Calu3 (cell line): ENCODE measurements at regions of chr11 and their contacts with region 1.

Region 1: DNA sequence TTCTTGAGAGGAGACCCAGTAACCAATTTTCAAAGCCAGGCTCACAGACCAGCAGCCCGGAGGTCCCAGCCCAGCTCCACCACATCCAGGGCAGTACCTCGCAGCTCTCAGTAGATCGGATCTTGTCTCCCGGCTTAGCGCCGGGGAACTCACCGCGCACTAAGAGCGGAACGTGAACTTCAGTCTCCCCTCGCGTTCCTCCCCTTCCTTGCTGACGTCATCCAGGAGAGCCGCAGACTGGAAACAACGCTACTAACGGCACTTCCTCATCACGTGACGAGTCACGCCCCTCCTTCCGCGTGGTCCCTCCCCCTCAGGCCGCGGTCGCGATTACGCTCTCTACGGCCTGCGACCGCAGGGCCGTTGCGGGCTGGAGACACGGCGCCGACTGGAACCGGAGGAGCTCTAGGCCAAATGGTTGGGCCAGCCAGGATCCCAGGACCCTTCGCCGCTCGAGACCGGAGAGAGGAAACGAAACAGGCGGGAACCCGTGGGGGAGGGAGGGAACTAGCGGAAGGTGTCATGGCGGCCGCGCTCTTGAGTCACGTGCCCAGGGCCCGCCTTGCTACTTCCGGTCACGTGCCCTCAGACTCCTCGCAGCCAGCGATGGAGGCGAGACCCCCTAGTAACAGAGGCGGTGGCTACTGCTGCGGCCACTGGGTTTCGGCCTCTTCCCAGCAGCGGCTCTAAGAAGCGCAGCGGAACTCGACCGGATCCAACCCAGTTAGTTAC is at the starts of genes GTF2H1 and HPS5:
- DNase-seq: peak; percentile 94
- H3K4me3 Mint-ChIP-seq: peak within 1 kb of the TSS; percentile 78
- H3K27ac Mint-ChIP-seq: peak within 1 kb of the TSS; percentile 99
- H3K4me1 Mint-ChIP-seq: peaks cover 62% of the 10 kb centered on the region
- H3K27me3 Mint-ChIP-seq: no peaks in the 10 kb centered on the region
- CTCF ChIP-seq: no peak
- total RNA-seq, gene GTF2H1: 43.0 and 44.3 TPM in 2 replicates
- total RNA-seq, gene HPS5: 25.2 and 26.4 TPM in 2 replicates

Region 2: DNA sequence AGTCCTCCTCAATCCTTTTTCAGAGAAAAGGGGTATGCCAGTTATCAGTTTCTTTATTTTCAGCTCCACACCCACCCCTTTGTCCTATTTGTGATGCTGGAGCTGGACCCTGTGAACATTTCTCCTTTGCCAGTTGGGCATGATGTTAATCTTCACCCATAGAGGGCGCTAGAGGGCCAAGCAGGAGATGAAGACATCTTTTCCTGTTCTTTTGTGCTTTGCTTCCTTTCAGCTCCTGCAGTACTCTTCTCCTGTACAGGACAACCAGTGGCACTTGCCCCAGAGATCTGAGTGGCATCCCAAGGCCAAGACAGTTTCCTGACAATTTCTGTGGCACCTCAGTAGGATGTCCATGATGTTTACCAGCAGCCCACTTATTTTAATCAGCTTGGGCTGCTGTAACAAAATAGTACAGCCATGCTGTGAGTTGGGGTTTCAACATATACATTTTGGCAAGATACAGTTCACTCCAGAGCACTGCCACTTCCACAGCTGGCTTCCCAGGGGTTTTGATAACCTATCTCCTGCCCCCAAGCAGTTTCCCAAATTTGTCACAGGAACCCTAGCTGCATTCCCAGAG is 78.3 kb before region 1 on chr11:
- CTCF ChIA-PET with region 1: no interaction called
- intact Hi-C with region 1: loop called (anchors 5 kb)
- DNase-seq: peak; percentile 76
- H3K4me3 Mint-ChIP-seq: no peak overlapping the region
- H3K27ac Mint-ChIP-seq: no peak overlapping the region
- H3K4me1 Mint-ChIP-seq: peaks cover 21% of the 10 kb centered on the region
- H3K27me3 Mint-ChIP-seq: no peaks in the 10 kb centered on the region
- CTCF ChIP-seq: peak; percentile 83

Region 3: DNA sequence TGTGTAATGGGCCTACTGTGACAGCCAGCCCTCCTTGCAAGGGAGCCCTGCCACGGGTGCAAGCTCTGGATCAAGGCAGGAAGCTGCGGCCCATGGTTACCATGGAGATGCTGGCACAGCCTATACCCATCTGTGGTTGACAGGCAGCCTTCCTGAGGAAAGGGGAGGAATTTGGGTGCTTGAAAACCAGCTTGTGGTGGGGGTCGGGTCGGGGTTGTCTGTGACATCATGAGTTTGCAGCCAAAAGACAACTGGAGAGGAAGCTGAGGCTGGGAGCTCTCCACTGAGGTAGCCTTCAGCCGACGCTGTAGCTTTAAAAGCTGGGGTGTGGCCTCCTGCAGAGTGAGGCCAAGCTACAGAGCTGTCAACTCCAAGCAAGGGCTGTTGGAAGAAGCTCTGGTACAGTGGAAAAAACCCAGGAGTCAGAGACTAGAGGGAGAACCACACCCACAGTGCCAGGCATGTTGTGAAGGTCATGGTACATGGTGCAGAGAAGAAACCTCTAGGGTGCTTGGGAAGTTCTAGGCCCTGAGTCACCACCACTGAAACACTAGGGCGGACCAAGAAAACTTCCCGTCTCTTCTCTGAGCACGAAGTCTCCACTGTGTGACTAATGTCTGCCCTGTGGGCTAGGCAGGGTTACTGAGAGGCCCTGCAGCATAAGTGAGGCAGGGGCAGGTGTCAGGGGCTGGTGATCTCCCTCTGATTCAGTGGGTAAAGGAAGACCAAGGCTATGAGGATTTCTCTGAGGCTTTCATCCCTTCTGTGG is 61.4 kb after region 1 on chr11:
- CTCF ChIA-PET with region 1: no interaction called
- intact Hi-C with region 1: loop called (anchors 5 kb)
- DNase-seq: peak; percentile 78
- H3K4me3 Mint-ChIP-seq: peak overlapping the region; percentile 61
- H3K27ac Mint-ChIP-seq: peak overlapping the region; percentile 98
- H3K4me1 Mint-ChIP-seq: peaks cover 41% of the 10 kb centered on the region
- H3K27me3 Mint-ChIP-seq: no peaks in the 10 kb centered on the region
- CTCF ChIP-seq: no peak

Region 4: DNA sequence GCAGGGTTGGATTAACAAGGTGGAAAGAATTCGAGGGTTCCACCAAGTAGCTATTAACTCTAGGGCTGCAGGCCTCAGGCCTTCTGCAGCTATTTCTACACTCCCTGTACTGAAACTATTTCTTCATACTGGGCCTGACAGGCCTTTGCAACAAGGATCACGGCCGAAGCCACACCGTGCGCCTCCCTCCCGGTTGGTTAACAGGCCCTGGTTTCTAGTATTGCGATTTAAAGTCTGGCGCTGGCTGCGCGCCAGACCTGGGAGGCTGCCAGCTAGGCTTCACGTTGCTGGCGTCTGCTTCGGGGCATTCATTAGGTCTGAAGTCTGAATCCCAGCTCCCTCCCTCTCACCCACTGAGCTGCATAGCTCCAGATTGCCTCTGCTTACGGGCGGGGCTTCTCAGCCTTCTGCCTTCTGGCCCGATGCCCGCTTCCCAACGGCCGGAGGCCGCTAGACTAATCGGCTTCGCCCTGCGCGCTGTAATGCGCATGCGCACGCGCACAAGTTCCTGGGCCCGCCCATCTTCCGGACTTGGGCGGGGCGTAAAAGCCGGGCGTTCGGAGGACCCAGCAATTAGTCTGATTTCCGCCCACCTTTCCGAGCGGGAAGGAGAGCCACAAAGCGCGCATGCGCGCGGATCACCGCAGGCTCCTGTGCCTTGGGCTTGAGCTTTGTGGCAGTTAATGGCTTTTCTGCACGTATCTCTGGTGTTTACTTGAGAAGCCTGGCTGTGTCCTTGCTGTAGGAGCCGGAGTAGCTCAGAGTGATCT is 73.8 kb after region 1 on chr11:
- CTCF ChIA-PET with region 1: no interaction called
- intact Hi-C with region 1: loop called (anchors 5 kb)
- DNase-seq: peak; percentile 98
- H3K4me3 Mint-ChIP-seq: peak overlapping the region; percentile 98
- H3K27ac Mint-ChIP-seq: peak overlapping the region; percentile 98
- H3K4me1 Mint-ChIP-seq: no peaks in the 10 kb centered on the region
- H3K27me3 Mint-ChIP-seq: no peaks in the 10 kb centered on the region
- CTCF ChIP-seq: no peak

Region 5: GRCh38 chr11:18802381-18803257 is 480.5 kb after region 1 on chr11:
- CTCF ChIA-PET with region 1: no interaction called
- intact Hi-C with region 1: no loop called
- DNase-seq: peak; percentile 65
- H3K4me3 Mint-ChIP-seq: no peak overlapping the region
- H3K27ac Mint-ChIP-seq: no peak overlapping the region
- H3K4me1 Mint-ChIP-seq: no peaks in the 10 kb centered on the region
- H3K27me3 Mint-ChIP-seq: peaks cover 97% of the 10 kb centered on the region
- CTCF ChIP-seq: peak; percentile 24